ENCODE measurements at regions of chr3 and their contacts with region 1.

Region 1: GRCh38 chr3:39707314-39707909 is 102.0 kb upstream of the MYRIP start:
- DNase-seq: no peak
- ATAC-seq: peak; percentile 50

Region 2: DNA sequence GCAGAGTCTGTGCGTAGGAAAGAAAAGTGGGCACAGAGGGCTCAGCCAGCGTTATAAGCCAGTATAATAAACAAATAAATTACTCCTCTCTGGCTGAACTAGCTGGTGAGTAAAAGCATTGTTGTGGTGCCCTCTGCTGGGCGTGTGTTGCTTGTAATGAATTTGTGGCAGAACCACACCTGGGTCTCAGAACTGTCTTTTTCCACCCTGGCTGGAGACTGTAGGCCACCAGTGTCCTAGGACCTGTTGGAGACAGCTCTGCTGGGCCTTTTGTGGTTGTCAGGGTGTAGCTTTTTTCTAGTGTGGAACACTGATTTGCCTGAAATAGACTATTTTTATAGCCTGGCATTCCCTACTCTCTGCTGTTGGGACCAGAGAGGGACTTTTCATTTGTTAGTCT is 471.6 kb after region 1 on chr3:
- intact Hi-C with region 1: loop called in 1 of 2 experiments (anchors 5 kb)
- DNase-seq: peak; percentile 42 to 89
- ATAC-seq: peak; percentile 84

Region 3: GRCh38 chr3:40864146-40864782 is 1156.9 kb after region 1 on chr3:
- intact Hi-C with region 1: no loop called
- DNase-seq: no peak
- ATAC-seq: no peak